Endothelial cell of umbilical vein (primary cell): ENCODE measurements at regions of chr17 and their contacts with region 1.

Region 1: DNA sequence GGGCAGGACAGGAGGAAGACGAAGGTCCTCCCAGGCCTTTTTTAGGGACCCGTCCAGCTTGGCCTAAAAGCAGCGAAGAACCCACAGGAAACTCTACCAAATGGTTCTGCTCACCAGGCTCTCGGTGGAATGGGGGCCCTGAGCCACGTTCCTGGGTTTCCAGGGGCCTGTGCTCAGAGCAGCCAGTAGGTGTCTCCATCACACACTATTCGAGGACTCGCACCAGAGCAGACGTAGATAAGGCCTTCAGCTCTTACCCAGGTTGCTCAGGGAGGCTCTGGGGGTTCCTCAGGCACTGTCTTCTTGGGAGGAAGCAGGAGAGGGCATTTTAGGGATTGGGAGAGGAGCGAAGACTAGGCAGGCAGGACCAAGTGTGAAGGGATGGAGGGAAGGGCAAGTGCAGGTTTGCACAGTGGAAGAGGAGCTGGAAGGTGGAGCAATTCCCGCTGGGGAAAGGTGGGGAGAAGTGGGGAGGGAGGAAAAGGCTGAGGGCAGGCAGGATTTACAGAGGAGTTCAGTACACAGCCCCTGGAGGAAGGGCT is 157.1 kb downstream of the RGS9 start:
- DNase-seq: peak; percentile 61
- H3K4me3 ChIP-seq: no peak overlapping the region
- H3K27ac ChIP-seq: no peak overlapping the region
- H3K4me1 ChIP-seq: peaks cover 24% of the 10 kb centered on the region
- H3K27me3 ChIP-seq: peaks cover 3 to 4% of the 10 kb centered on the region in 2 experiments
- CTCF ChIP-seq: peak; percentile 84 to 86
- POLR2A ChIP-seq: no peak

Region 2: DNA sequence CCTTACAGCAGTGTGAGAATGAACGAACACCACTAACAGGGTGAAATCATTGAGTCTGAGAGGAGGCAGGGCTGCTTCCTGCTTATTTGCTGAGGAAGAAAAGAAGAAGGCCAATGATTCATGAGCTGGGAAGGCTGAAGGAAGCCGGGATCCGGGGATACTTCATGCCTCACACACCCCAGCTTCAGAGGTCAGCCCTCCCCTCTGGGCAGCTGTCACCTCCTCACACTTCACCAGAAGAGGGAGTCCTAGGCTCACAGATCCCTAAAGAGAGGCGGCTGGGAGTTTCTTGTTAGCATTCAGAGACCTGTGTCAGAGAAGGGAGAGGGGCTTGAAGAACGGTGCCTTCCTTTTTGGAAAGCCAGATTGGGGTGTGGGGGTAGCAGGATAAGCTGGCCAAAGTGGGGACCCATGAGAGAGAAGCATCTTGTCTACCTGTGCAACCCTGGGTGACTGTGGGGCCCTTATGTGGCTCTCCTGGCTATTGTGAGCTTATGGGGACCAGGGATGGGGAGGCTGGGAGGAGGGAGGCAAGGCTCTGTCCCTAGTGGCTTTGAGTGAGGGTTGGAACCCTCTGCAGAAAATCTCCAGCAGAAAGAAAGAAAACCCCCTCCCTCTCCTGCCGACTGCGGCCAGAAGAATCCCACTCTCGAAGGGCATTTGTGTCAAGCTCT is 62.5 kb before region 1 on chr17:
- CTCF ChIA-PET with region 1: interaction called, 56 read pairs
- POLR2A ChIA-PET with region 1: no interaction called
- dilution Hi-C with region 1: no loop called
- intact Hi-C with region 1: loop called (anchors 2 kb)
- DNase-seq: peak; percentile 72
- H3K4me3 ChIP-seq: no peak overlapping the region
- H3K27ac ChIP-seq: no peak overlapping the region
- H3K4me1 ChIP-seq: peaks cover 13% of the 10 kb centered on the region
- H3K27me3 ChIP-seq: peaks cover 8 to 10% of the 10 kb centered on the region in 2 experiments
- CTCF ChIP-seq: peak; percentile 80 to 82
- POLR2A ChIP-seq: no peak

Region 3: GRCh38 chr17:65283704-65284103 is 10.5 kb before region 1 on chr17:
- CTCF ChIA-PET with region 1: interaction called, 14 read pairs
- POLR2A ChIA-PET with region 1: no interaction called
- dilution Hi-C with region 1: no loop called
- intact Hi-C with region 1: loop called (anchors 1 kb)
- DNase-seq: peak; percentile 73
- H3K4me3 ChIP-seq: no peak overlapping the region
- H3K27ac ChIP-seq: no peak overlapping the region
- H3K4me1 ChIP-seq: peaks cover 11% of the 10 kb centered on the region
- H3K27me3 ChIP-seq: no peaks in the 10 kb centered on the region
- CTCF ChIP-seq: no peak
- POLR2A ChIP-seq: no peak

Region 4: DNA sequence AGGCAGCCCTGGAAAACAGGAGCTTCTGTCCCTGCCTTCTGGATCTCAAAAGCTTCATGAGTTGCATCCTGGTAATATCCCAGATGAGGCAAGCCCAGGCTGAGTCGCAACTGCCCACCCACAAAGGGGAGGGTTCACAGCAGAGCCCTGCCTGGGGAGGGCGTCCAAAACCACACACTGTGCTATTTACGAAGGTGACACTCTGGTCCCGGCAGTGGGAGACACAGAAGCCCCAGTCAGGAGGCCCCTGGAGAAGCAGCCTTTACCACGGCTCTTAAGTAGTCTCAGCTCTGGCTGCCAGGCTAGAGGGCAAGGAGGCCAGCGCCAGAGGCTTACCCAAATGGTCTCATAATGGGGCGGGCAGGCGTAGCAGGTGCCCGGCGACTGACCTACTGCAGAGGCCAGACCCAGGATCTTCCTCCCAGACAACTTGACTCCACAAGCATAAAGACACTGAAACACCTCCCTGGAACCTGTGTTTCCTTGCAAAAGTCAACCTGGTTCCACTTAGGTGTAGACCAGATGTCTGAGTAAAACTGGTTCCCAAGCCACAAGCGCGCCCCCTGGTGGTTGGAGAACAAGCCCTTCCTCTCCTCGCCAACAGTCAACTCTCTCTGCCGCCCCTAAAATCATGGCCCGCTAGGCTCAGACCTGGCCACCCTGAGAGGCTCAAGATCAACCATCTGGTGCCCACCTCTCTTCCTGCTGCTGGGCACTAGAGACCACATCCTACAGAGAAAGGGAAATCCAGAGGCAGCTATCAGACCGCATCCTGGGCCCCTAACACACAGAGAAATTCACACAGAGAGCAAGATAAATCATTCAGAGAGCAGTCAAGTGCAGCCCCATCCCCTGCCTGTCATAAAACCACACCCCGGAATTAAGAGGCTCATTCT is 262.0 kb after region 1 on chr17:
- CTCF ChIA-PET with region 1: interaction called, 50 read pairs
- POLR2A ChIA-PET with region 1: no interaction called
- dilution Hi-C with region 1: no loop called
- intact Hi-C with region 1: loop called (anchors 1 kb)
- DNase-seq: peak; percentile 21
- H3K4me3 ChIP-seq: no peak overlapping the region
- H3K27ac ChIP-seq: no peak overlapping the region
- H3K4me1 ChIP-seq: peaks cover 5% of the 10 kb centered on the region
- H3K27me3 ChIP-seq: peaks cover 4 to 5% of the 10 kb centered on the region in 2 experiments
- CTCF ChIP-seq: peak; percentile 76 to 79
- POLR2A ChIP-seq: no peak

Region 5: GRCh38 chr17:65794572-65794971 is 500.3 kb after region 1 on chr17:
- CTCF ChIA-PET with region 1: interaction called, 39 read pairs
- POLR2A ChIA-PET with region 1: no interaction called
- dilution Hi-C with region 1: no loop called
- intact Hi-C with region 1: loop called (anchors 2 kb)
- DNase-seq: peak; percentile 35
- H3K4me3 ChIP-seq: no peak overlapping the region
- H3K27ac ChIP-seq: no peak overlapping the region
- H3K4me1 ChIP-seq: peaks cover 3% of the 10 kb centered on the region
- H3K27me3 ChIP-seq: no peaks in the 10 kb centered on the region
- CTCF ChIP-seq: peak; percentile 31 to 56
- POLR2A ChIP-seq: no peak

Region 6: GRCh38 chr17:65988081-65988850 is 694.0 kb after region 1 on chr17:
- CTCF ChIA-PET with region 1: interaction called, 26 read pairs
- POLR2A ChIA-PET with region 1: no interaction called
- dilution Hi-C with region 1: no loop called
- intact Hi-C with region 1: loop called (anchors 1 kb)
- DNase-seq: peak; percentile 54
- H3K4me3 ChIP-seq: no peak overlapping the region
- H3K27ac ChIP-seq: no peak overlapping the region
- H3K4me1 ChIP-seq: no peaks in the 10 kb centered on the region
- H3K27me3 ChIP-seq: no peaks in the 10 kb centered on the region
- CTCF ChIP-seq: peak; percentile 30 to 60
- POLR2A ChIP-seq: no peak